ENCODE measurements at regions of chr14 and their contacts with region 1.

Region 1: GRCh38 chr14:28608851-28609828 is 157.4 kb upstream of the FOXG1 start:
- DNase-seq: peak; percentile 54
- H3K4me3 ChIP-seq: no peak overlapping the region
- H3K27ac ChIP-seq: no peak overlapping the region
- H3K4me1 ChIP-seq: no peaks in the 10 kb centered on the region
- H3K27me3 ChIP-seq: peaks cover 0 to 3% of the 10 kb centered on the region in 2 experiments
- CTCF ChIP-seq: peak; percentile 62 to 71
- POLR2A ChIP-seq: no peak

Region 2: DNA sequence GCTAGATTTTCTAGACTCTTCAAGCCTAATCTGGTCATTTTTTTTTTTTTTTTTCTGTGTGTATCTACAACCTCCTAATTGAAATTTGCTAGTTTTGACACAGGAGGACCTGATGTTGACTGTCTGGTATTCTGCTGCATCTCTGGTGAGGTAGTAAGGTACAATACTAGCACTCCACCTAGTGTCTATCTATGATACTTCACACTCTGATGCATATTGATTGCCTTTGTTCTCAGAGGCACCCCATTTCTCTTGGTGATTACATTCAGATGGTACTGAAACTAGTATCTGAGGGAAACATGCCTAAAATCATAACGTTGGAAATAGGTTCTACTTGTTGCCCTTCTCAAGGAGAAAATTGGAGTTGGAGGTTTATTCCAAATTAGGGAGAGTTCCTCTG is 1080.8 kb before region 1 on chr14:
- CTCF ChIA-PET with region 1: no interaction called
- POLR2A ChIA-PET with region 1: no interaction called
- dilution Hi-C with region 1: no loop called
- intact Hi-C with region 1: loop called (anchors 10 kb)
- DNase-seq: peak; percentile 50
- H3K4me3 ChIP-seq: no peak overlapping the region
- H3K27ac ChIP-seq: no peak overlapping the region
- H3K4me1 ChIP-seq: no peaks in the 10 kb centered on the region
- H3K27me3 ChIP-seq: no peaks in the 10 kb centered on the region
- CTCF ChIP-seq: peak; percentile 32 to 51
- POLR2A ChIP-seq: no peak

Region 3: GRCh38 chr14:28142400-28143015 is 466.6 kb before region 1 on chr14:
- CTCF ChIA-PET with region 1: no interaction called
- POLR2A ChIA-PET with region 1: no interaction called
- dilution Hi-C with region 1: no loop called
- intact Hi-C with region 1: loop called (anchors 5 kb)
- DNase-seq: no peak
- H3K4me3 ChIP-seq: no peak overlapping the region
- H3K27ac ChIP-seq: no peak overlapping the region
- H3K4me1 ChIP-seq: no peaks in the 10 kb centered on the region
- H3K27me3 ChIP-seq: no peaks in the 10 kb centered on the region
- CTCF ChIP-seq: no peak
- POLR2A ChIP-seq: no peak

Region 4: GRCh38 chr14:28294834-28295440 is 314.2 kb before region 1 on chr14:
- CTCF ChIA-PET with region 1: interaction called, 48 read pairs
- POLR2A ChIA-PET with region 1: no interaction called
- dilution Hi-C with region 1: no loop called
- intact Hi-C with region 1: loop called (anchors 1 kb)
- DNase-seq: peak; percentile 33
- H3K4me3 ChIP-seq: no peak overlapping the region
- H3K27ac ChIP-seq: no peak overlapping the region
- H3K4me1 ChIP-seq: no peaks in the 10 kb centered on the region
- H3K27me3 ChIP-seq: no peaks in the 10 kb centered on the region
- CTCF ChIP-seq: peak; percentile 10 to 38
- POLR2A ChIP-seq: no peak

Region 5: GRCh38 chr14:28375295-28375694 is 233.8 kb before region 1 on chr14:
- CTCF ChIA-PET with region 1: interaction called, 55 read pairs
- POLR2A ChIA-PET with region 1: no interaction called
- dilution Hi-C with region 1: no loop called
- intact Hi-C with region 1: loop called (anchors 1 kb)
- DNase-seq: peak; percentile 19
- H3K4me3 ChIP-seq: no peak overlapping the region
- H3K27ac ChIP-seq: no peak overlapping the region
- H3K4me1 ChIP-seq: peaks cover 5% of the 10 kb centered on the region
- H3K27me3 ChIP-seq: no peaks in the 10 kb centered on the region
- CTCF ChIP-seq: peak; percentile 33 to 39
- POLR2A ChIP-seq: no peak